ENCODE measurements at regions of chr4 and their contacts with region 1.

Region 1: DNA sequence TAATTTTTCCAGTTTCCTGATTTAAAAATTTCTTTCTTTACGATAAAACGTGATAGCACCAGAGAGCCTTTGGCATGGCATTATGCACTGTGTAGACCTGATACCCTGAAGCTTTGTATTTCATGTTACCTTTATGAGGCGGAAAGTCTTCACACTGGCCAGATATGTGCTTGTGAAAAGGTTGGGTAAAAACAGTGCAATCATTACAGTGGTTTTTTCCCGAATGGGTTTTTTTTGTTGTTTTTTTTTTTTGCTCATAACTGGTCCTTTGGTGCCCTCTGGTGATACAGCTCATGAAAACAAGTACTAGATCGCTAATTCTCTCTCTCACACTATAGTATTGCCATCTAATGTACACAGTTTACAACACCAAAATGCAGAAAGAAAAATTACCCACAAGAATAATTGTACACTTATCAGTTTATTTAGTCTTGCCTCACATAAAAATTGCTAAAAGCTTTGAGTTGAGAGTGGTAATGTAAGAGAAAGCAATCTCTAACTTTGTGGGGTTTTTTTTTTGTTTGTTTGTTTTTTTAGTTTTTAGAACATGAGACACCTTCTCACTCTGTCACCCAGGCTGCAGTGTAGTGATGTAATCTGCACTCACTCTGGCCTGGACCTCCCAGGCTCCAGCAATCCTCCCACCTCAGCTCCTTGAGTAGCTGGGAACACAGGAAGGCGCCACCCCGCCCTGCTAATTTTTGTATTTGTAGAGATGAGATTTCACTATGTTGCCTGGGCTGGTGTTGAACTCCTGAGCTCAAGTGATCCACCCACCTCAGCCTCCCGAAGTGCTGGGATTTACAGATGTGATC is 21.3 kb downstream of the SPCS3 start:
- DNase-seq: no peak
- H3K4me3 ChIP-seq: no peak overlapping the region
- H3K27ac ChIP-seq: no peak overlapping the region
- H3K27me3 ChIP-seq: no peaks in the 10 kb centered on the region
- CTCF ChIP-seq: peak; percentile 65

Region 2: GRCh38 chr4:175947117-175947722 is 393.9 kb before region 1 on chr4:
- CTCF ChIA-PET with region 1: interaction called, 13 read pairs
- POLR2A ChIA-PET with region 1: no interaction called
- DNase-seq: peak; percentile 1
- H3K4me3 ChIP-seq: no peak overlapping the region
- H3K27ac ChIP-seq: no peak overlapping the region
- H3K27me3 ChIP-seq: no peaks in the 10 kb centered on the region
- CTCF ChIP-seq: peak; percentile 69

Region 3: GRCh38 chr4:176044589-176044951 is 296.5 kb before region 1 on chr4:
- CTCF ChIA-PET with region 1: interaction called, 11 read pairs
- POLR2A ChIA-PET with region 1: no interaction called
- DNase-seq: no peak
- H3K4me3 ChIP-seq: no peak overlapping the region
- H3K27ac ChIP-seq: no peak overlapping the region
- H3K27me3 ChIP-seq: no peaks in the 10 kb centered on the region
- CTCF ChIP-seq: no peak

Region 4: DNA sequence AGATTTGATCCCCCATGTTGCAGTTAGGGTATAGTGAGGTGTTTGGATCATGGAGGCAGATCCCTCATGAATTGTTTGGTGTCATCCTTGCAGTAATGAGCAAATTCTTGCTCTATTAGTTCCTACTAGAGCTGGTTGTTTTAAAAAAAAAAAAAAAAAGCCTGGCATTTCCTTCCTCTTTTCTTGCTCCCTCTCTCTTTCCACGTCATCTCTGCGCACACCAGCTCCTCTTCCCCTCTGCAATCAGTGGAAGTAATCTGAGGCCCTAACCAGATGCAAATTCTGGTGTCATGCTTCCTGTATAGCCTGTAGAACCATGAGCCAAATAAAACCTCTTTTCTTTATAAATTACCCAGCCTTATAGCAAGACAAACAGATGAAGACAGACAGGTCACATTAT is 251.0 kb before region 1 on chr4:
- CTCF ChIA-PET with region 1: no interaction called
- POLR2A ChIA-PET with region 1: no interaction called
- DNase-seq: no peak
- H3K4me3 ChIP-seq: no peak overlapping the region
- H3K27ac ChIP-seq: no peak overlapping the region
- H3K27me3 ChIP-seq: no peaks in the 10 kb centered on the region
- CTCF ChIP-seq: no peak

Region 5: DNA sequence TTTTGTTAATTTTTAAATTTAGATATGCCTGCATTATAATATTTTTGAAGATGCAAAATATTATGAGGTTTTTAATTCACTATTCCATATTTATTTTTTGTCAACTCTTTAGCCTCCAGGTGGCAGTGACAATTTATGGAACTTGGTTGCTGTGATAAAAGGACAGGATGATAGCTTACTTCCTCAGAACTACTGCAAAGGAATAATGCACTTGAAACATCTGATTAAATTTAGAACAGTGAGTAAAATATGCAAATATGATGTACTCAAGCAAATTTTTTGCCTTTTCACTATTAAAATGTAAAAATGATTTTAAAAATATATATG is 190.8 kb before region 1 on chr4:
- CTCF ChIA-PET with region 1: interaction called, 60 read pairs
- POLR2A ChIA-PET with region 1: interaction called, 5 read pairs
- DNase-seq: no peak
- H3K4me3 ChIP-seq: no peak overlapping the region
- H3K27ac ChIP-seq: no peak overlapping the region
- H3K27me3 ChIP-seq: no peaks in the 10 kb centered on the region
- CTCF ChIP-seq: peak; percentile 36

Region 6: GRCh38 chr4:176306837-176307595 is 34.1 kb before region 1 on chr4:
- CTCF ChIA-PET with region 1: interaction called, 13 read pairs
- POLR2A ChIA-PET with region 1: no interaction called
- DNase-seq: no peak
- H3K4me3 ChIP-seq: no peak overlapping the region
- H3K27ac ChIP-seq: no peak overlapping the region
- H3K27me3 ChIP-seq: no peaks in the 10 kb centered on the region
- CTCF ChIP-seq: no peak

Measured in AG04450 (cell line).